Gastrocnemius medialis (tissue), 4 donors: ENCODE measurements at regions of chr1 and their contacts with region 1.

Region 1: DNA sequence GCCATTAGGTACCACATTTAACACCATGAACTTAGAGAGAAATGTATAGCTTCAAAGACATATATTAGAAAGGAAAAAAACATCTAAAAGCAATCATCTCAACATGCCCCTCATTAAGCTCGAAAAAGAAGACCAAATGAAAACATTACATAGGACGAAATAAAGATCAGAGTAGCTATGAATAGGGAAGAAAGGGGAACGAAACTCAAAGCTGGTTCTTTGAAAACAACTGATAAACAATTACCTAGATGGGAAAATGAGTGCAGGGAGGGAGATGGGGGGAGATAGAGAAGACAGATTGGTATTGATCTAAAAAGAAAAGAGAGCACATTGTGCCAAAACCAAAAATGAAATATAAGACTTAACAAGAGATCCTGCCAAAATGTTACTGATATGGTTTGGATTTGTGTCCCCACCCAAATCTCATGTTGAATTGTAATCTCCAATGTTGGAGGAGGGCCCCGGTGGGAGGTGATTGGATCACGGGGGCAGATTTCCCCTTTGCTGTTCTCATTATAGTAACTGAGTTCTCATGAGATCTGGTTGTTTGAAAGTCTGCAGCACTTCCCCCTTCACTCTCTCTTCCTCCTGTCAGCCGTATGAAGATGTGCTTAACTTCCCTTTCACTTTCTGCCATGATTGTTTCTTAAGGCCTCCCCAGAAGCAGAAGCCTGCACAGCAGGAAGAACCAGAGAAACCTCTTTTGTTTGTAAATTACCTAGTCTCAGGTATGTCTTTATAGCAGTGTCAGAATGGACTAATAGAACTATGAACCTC is 28.6 kb downstream of the TRIM33 start:
- DNase-seq: no peak
- ATAC-seq: no peak
- H3K4me3 ChIP-seq: no peak overlapping the region
- H3K27ac ChIP-seq: no peak overlapping the region
- H3K4me1 ChIP-seq: peaks cover 0 to 8% of the 10 kb centered on the region in 2 donors
- H3K27me3 ChIP-seq: no peaks in the 10 kb centered on the region
- CTCF ChIP-seq: no peak
- POLR2A ChIP-seq: no peak

Region 2: DNA sequence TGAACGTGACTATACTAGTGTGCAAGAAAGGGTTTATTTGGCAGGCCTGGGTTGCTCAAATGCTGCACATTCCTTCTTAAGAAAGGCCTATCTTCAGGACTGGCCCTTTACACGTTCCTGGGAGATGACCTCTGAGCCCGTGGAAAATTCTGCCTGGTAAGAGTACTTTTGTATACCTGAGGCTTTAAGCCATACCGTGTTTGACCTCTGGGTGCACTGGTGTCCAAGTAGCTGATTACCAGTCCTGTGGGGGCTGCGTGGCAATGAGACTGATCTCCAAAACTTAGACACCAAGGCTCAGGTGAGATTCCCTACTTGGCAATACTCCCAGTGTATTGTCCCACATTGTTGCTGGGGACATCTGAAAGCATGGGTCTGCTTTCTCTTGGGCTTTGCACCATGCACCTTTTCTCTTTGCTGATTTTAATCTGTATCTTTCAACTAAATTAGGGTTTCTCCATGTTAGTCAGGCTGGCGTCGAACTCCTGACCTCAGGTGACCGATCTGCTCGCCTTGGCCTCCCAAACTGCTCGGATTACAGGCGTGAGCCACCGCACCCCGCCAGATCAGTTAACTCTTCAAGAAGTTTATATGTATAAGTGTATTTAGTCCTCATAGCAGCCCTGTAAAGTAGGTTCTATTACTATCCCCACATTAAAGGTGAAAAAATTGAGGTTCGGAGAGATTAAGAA is 15.9 kb before region 1 on chr1:
- in situ Hi-C with region 1: no loop called
- intact Hi-C with region 1: loop called (anchors 1 kb)
- DNase-seq: no peak
- ATAC-seq: no peak
- H3K4me3 ChIP-seq: no peak overlapping the region
- H3K27ac ChIP-seq: no peak overlapping the region
- H3K4me1 ChIP-seq: peaks cover 13 to 16% of the 10 kb centered on the region in 2 donors
- H3K27me3 ChIP-seq: no peaks in the 10 kb centered on the region
- CTCF ChIP-seq: no peak
- POLR2A ChIP-seq: no peak

Region 3: GRCh38 chr1:115031595-115031994 is 549.2 kb after region 1 on chr1:
- in situ Hi-C with region 1: no loop called
- intact Hi-C with region 1: no loop called
- DNase-seq: no peak
- ATAC-seq: no peak
- H3K4me3 ChIP-seq: no peak overlapping the region
- H3K27ac ChIP-seq: no peak overlapping the region
- H3K4me1 ChIP-seq: no peaks in the 10 kb centered on the region
- H3K27me3 ChIP-seq: no peaks in the 10 kb centered on the region
- CTCF ChIP-seq: no peak
- POLR2A ChIP-seq: no peak